ENCODE measurements at regions of chr1 and their contacts with region 1.

Region 1: DNA sequence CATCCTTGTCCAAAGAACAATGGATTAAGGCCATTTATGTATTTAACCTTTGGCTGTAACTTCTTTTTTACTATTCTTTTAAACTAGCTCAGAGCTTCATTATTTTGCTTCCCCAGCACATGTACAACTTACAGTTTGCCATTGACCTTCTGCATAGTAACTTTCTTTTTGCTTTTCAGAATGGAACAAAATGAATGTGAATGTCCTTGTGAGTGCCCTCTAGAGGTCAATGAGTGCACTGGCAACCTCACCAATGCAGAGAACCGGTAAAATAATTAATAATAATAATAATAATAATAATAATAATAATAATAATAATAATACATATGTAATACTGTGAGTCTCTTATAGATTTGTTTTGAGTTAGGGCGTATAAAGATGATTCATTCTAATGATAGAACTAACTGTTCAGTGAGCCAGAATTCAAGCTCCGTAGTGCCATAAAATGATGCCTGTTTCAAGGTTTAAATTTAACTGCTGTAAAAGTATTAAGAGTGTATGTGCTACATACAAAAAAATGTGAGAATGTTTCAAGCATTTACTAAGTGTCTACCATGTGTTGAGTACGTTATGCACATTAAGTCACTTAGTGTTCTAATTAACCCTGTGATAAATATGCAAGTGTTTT is 69.0 kb upstream of the RAVER2 start:
- DNase-seq: no peak
- H3K4me3 Mint-ChIP-seq: no peak overlapping the region
- H3K27ac Mint-ChIP-seq: no peak overlapping the region
- H3K4me1 Mint-ChIP-seq: no peaks in the 10 kb centered on the region
- H3K27me3 Mint-ChIP-seq: no peaks in the 10 kb centered on the region

Region 2: GRCh38 chr1:64653466-64653865 is 22.4 kb before region 1 on chr1:
- CTCF ChIA-PET with region 1: no interaction called
- intact Hi-C with region 1: no loop called
- DNase-seq: no peak
- H3K4me3 Mint-ChIP-seq: no peak overlapping the region
- H3K27ac Mint-ChIP-seq: no peak overlapping the region
- H3K4me1 Mint-ChIP-seq: no peaks in the 10 kb centered on the region
- H3K27me3 Mint-ChIP-seq: no peaks in the 10 kb centered on the region

Region 3: DNA sequence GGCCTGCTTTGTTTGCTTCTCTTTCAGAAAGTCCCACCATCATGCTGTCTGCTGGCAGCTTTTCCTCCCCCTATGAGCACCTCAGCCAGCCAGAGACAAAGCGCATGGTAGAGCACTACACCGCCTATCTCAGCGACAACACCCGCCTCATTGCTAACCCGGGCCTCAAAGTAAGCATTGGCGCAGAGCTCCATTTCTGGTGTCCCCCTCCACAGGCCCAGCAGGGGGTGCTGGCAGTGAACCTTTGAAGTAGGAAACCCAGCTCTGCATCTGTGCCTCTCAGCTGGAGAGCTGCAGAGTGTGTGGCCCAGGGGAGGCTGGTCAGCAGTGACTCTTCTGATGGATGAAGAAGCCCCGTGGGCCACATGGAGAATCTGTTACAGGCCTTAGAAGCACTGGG is 12.2 kb before region 1 on chr1:
- CTCF ChIA-PET with region 1: interaction called, 31 read pairs
- intact Hi-C with region 1: no loop called
- DNase-seq: peak; percentile 34
- H3K4me3 Mint-ChIP-seq: no peak overlapping the region
- H3K27ac Mint-ChIP-seq: no peak overlapping the region
- H3K4me1 Mint-ChIP-seq: no peaks in the 10 kb centered on the region
- H3K27me3 Mint-ChIP-seq: no peaks in the 10 kb centered on the region

Region 4: DNA sequence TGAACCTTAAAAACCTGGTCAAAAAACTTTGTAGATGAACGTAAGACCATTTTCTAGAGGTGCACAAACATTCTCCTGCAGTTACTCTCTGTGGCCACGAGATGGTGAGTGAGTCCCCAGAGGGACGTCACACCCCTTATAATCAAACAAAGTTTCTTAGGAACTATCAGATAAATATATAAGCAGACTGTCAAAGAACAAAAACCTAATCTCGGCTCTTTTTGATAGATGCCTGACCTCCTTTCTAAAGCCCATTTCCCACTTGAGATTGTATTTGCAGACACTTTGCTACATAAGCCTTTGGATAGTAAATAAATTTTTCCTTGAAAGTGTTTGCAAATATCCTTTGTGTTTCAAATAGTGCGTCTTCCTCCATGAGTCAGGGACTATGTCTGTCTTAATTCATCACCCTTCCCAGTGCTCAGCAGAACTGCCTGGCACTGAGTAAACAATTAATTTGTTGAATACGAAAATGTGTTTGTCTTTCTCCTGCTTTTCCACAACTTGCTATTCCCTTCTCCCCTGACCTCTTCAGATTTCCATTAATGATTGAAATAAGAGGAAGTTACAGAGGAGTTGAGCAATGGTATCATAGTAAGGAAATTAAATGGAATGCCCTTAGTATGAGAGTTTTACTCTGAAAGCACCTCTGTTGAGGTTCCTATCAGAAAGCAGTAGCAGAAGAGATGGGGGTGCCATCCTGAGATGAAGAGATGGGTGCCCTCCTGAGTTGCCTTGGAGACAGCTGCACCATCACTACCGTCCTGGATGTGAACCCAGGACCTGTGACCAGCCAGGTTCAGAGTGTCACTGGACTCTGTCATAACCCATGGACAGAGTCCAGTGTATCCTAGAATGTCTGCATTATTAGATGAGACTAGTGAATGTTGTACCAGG is 11.2 kb after region 1 on chr1:
- CTCF ChIA-PET with region 1: interaction called, 16 read pairs
- intact Hi-C with region 1: no loop called
- DNase-seq: peak; percentile 39
- H3K4me3 Mint-ChIP-seq: no peak overlapping the region
- H3K27ac Mint-ChIP-seq: no peak overlapping the region
- H3K4me1 Mint-ChIP-seq: peaks cover 5% of the 10 kb centered on the region
- H3K27me3 Mint-ChIP-seq: no peaks in the 10 kb centered on the region

Region 5: DNA sequence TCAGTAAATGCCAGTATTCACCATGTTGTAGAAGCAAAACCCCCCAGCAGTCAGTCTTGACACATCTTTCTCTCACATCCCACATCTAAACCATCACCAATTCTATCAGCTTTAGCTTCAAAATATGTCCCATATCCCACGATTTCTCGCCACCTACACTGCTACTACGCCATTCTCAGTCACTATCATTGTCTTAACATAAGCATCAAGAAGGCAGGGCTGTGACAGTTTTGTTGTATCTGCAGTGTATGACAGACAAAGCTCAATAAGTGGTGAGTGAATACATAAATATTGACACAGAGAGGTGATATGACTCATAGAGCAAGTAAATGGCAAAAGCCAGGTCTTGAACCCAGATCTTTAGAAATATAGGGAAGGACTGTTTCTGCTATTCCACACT is 230.6 kb after region 1 on chr1:
- CTCF ChIA-PET with region 1: no interaction called
- intact Hi-C with region 1: no loop called
- DNase-seq: peak; percentile 60
- H3K4me3 Mint-ChIP-seq: no peak overlapping the region
- H3K27ac Mint-ChIP-seq: peak overlapping the region; percentile 34
- H3K4me1 Mint-ChIP-seq: peaks cover 88% of the 10 kb centered on the region
- H3K27me3 Mint-ChIP-seq: no peaks in the 10 kb centered on the region